Spleen (tissue), 13 donors: ENCODE measurements at regions of chr20 and their contacts with region 1.

Region 1: GRCh38 chr20:37265152-37265551 is 3.5 kb upstream of the GHRH start:
- DNase-seq: no peak
- H3K4me3 ChIP-seq: no peak overlapping the region
- H3K27ac ChIP-seq: no peak overlapping the region
- H3K4me1 ChIP-seq: peaks cover 0 to 20% (median 10%) of the 10 kb centered on the region in 6 donors
- H3K27me3 ChIP-seq: peaks cover 0 to 19% (median 0%) of the 10 kb centered on the region in 7 donors
- CTCF ChIP-seq: no peak
- POLR2A ChIP-seq: no peak

Region 2: DNA sequence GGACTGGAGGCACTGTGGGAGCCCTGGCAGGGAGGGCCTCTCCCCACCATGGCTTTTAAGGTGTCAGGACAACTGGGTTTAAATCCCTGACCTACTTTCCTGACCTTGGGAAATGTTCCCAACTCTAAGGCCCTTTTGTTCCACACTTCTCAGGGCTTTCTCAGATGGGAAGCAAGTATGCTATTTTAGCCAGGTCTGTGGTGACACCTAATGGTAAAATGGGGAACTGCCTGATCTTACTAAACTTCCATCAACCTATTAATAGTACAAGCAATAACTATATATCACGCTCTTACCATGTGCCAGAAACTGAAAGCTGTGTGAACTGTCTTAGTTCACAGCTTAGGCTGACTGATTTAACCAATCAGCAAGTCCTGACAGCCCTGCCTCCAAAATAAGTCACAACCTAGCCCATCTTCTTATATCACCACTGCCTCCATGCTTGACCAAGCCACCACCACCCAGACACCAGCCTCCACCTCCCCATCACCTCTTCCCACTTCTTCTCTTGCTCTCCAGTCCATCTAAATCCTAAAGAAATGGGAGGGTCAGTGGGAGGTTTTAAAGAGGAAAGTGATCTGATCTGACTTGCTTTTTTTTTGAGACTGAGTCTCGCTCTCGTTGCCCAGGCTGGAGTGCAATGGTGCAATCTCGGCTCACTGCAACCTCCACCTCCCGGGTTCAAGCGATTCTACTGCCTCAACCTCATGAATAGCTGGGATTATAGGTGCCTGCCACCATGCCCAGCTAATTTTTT is 269.4 kb after region 1 on chr20:
- intact Hi-C with region 1: loop called (anchors 5 kb)
- DNase-seq: peak; percentile 50
- H3K4me3 ChIP-seq: no peak overlapping the region
- H3K27ac ChIP-seq: peak overlapping the region in 1 of 8 donors; percentile 18
- H3K4me1 ChIP-seq: peaks cover 0 to 13% (median 8%) of the 10 kb centered on the region in 6 donors
- H3K27me3 ChIP-seq: no peaks in the 10 kb centered on the region
- CTCF ChIP-seq: peak; percentile 80 to 97 (median 90)
- POLR2A ChIP-seq: no peak